B cell (primary cell): ENCODE measurements at regions of chr12 and their contacts with region 1.

Region 1: DNA sequence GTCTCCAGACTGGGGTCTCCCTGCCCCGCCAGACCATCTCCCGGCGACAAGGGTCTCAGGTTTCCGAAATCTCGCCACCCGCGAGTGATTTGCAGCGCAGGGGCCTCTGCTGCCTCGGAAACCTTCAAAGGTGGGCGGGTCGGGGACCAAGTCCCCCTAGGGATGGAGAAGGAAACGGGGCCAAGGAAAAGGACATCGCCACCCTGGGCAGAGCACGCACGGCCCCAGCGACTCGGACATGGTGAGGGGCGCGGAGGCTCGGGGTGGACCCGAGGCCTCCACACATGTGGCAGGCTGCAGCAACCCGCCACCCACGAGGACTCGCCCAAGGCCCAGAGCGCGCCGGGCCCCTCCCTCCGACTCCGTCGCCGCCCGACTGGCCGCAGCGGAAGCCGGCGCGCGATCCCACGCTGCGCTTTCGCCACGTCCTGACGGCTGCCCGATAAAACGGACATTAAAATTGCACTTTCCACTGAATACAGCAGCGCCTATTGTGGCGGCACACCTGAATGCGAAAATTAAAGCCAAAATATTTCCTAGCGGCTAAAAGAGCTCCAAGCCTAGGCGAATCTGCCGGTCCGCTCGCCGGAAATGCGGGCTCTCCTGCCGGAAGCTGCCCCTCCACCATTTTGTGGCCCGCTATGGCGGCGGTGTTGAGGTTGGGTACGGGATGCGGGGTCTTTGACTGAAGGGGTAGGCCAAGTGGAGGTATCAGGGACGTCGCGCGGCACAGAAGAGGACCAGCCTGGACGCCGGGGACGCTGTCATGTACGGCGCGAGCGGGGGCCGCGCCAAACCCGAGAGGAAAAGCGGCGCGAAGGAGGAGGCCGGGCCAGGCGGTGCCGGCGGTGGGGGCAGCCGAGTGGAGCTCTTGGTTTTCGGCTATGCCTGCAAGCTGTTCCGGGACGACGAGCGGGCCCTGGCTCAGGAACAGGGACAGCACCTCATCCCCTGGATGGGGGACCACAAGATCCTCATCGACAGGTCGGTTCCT is at the start of gene SFSWAP:
- DNase-seq: peak; percentile 92
- ATAC-seq: peak; percentile 95
- H3K4me3 ChIP-seq: peak within 1 kb of the TSS; percentile 83 to 100 (median 96)
- H3K4me3 Mint-ChIP-seq: peak within 1 kb of the TSS; percentile 98
- H3K27ac ChIP-seq: peak within 1 kb of the TSS; percentile 93 to 99
- H3K27ac Mint-ChIP-seq: peak within 1 kb of the TSS; percentile 99
- H3K4me1 ChIP-seq: peaks cover 16 to 22% of the 10 kb centered on the region in 2 donors
- H3K4me1 Mint-ChIP-seq: peaks cover 30% of the 10 kb centered on the region
- H3K27me3 ChIP-seq: no peaks in the 10 kb centered on the region
- H3K27me3 Mint-ChIP-seq: no peaks in the 10 kb centered on the region
- CTCF ChIP-seq: no peak
- total RNA-seq, gene SFSWAP: 122 and 135 TPM in 2 replicates

Region 2: GRCh38 chr12:131773582-131774221 is 62.9 kb after region 1 on chr12:
- CTCF ChIA-PET with region 1: interaction called, 3 read pairs
- POLR2A ChIA-PET with region 1: no interaction called
- intact Hi-C with region 1: loop called (anchors 5 kb)
- DNase-seq: peak; percentile 76
- ATAC-seq: peak; percentile 74
- H3K4me3 ChIP-seq: peak overlapping the region in 4 of 5 experiments; percentile 30 to 60 (median 50)
- H3K4me3 Mint-ChIP-seq: peak overlapping the region; percentile 91
- H3K27ac ChIP-seq: peak overlapping the region; percentile 93 to 97
- H3K27ac Mint-ChIP-seq: peak overlapping the region; percentile 97
- H3K4me1 ChIP-seq: peaks cover 62 to 68% of the 10 kb centered on the region in 2 donors
- H3K4me1 Mint-ChIP-seq: peaks cover 78% of the 10 kb centered on the region
- H3K27me3 ChIP-seq: no peaks in the 10 kb centered on the region
- H3K27me3 Mint-ChIP-seq: no peaks in the 10 kb centered on the region
- CTCF ChIP-seq: no peak

Region 3: DNA sequence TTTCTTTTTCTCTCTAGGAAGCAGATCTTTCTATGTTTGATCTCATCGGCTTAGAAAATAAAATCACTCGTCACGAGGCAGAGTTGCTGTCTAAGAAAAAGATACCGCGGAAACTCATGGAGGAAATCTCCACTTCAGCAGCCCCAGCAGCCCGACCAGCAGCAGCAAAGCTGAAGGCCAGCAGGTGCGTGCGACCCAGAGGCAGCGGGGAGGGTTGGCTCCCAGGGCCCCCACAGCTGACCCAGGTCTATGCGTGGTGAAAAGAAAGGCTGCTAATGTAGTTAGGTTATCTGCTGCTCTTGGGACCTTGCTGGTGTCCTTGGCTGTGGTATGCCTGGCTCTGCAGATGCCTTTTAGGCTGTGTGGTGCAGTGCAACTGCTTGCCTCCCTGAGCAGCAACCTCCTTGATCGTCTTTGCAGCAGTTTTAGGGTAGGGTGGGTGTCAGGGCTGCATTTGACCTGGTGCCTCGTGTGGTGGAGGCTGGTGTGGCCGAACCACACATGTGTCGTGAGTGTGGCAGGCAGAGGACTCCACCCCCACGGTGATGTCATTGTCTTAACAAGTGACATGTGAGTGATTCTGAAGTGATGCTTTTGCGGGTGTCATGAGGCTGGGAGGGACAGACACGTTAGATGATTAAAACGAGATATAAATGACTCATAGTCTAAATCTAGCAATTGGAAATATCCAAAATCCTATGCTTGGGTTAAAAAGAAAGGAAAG is 307.6 kb after region 1 on chr12:
- CTCF ChIA-PET with region 1: no interaction called
- POLR2A ChIA-PET with region 1: no interaction called
- intact Hi-C with region 1: no loop called
- DNase-seq: no peak
- ATAC-seq: no peak
- H3K4me3 ChIP-seq: no peak overlapping the region
- H3K4me3 Mint-ChIP-seq: no peak overlapping the region
- H3K27ac ChIP-seq: no peak overlapping the region
- H3K27ac Mint-ChIP-seq: no peak overlapping the region
- H3K4me1 ChIP-seq: no peaks in the 10 kb centered on the region
- H3K4me1 Mint-ChIP-seq: no peaks in the 10 kb centered on the region
- H3K27me3 ChIP-seq: no peaks in the 10 kb centered on the region
- H3K27me3 Mint-ChIP-seq: no peaks in the 10 kb centered on the region
- CTCF ChIP-seq: no peak